ENCODE measurements at regions of chr3 and their contacts with region 1.

Region 1: DNA sequence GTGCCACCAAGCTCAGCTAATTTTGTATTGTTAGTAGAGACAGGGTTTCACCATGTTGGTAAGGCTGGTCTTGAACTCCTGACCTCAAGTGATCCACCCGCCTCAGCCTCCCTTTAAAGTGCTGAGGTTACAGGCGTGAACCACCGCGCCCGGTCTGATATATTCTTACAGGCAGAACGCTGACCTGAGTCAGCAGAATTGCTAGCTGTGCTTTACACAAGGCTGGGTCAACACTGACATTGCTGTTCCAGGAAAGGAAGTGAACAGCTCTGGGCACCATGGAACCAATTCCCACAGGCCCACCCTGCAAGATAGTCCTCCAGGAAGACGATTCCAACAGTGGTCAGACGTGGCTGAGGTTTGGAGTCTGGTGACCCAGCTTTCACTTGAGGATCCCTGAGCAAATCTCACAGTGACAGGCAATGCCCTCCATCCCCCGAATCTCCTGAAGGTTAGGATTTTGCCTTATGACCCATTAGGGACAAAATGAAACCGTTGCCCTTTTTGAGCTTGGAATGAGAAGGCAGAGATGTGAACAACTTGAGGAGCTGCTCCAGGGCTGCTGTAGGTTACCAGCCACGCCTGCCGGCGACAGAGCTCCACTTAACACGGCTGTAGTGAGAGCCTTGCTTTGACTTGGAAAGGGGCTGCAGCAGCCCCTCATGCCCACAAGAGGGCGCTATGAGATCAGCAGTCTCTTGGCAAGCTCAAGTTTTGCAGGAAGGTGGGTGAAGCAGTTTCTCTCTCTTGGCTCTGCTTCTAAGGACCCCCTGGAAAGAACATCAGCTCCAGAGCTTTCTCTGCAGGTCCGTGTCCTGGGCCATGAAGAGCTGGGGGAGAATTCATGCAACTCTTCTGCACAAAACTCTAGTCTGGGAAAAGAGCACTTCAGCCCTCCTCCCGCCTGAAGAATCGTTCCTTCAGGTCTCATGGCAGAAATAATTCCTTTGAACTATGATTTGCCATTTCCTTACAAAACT is 74.1 kb downstream of the SENP2 start:
- DNase-seq: peak; percentile 77
- ATAC-seq: peak; percentile 86
- H3K4me3 Mint-ChIP-seq: no peak overlapping the region
- H3K27ac Mint-ChIP-seq: no peak overlapping the region
- H3K4me1 Mint-ChIP-seq: peaks cover 7% of the 10 kb centered on the region
- H3K27me3 Mint-ChIP-seq: peaks cover 31% of the 10 kb centered on the region

Region 2: GRCh38 chr3:185645596-185646381 is 14.4 kb before region 1 on chr3:
- CTCF ChIA-PET with region 1: interaction called, 16 read pairs
- DNase-seq: no peak
- ATAC-seq: no peak
- H3K4me3 Mint-ChIP-seq: no peak overlapping the region
- H3K27ac Mint-ChIP-seq: no peak overlapping the region
- H3K4me1 Mint-ChIP-seq: no peaks in the 10 kb centered on the region
- H3K27me3 Mint-ChIP-seq: peaks cover 14% of the 10 kb centered on the region

Region 3: DNA sequence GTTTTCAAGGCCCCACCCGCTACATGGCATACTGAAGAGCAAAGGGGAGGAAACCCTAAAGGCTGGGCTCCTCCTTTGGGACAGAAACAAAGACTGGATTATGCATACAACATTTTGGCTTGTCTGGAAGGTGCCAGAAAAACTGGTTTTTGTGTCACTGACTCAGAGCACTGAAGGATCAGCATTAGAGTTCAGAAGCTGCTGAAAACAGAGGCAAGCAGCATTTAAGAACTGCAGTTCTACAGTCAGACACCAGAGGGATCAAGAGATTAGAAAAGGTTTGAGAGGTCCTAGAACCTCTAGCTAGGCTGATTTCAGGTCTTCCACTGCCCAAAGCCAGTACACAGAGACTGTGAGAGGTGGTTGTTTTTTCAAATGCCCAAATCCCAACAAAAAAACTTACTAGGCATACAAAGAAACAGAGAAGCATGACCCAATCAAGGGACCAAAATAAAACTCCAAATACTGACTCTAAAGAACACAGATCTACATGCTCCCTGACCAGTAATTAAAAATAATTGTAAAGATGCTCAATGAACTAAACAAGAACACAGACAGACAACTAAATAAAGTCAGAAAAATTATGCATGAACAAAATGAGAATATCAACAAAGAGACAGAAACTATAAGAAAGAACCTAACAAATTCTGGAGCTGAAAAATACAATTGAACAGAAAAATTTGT is 17.1 kb after region 1 on chr3:
- CTCF ChIA-PET with region 1: interaction called, 14 read pairs
- DNase-seq: no peak
- ATAC-seq: peak; percentile 61
- H3K4me3 Mint-ChIP-seq: no peak overlapping the region
- H3K27ac Mint-ChIP-seq: no peak overlapping the region
- H3K4me1 Mint-ChIP-seq: no peaks in the 10 kb centered on the region
- H3K27me3 Mint-ChIP-seq: peaks cover 50% of the 10 kb centered on the region

Region 4: GRCh38 chr3:185764163-185764979 is 104.1 kb after region 1 on chr3:
- CTCF ChIA-PET with region 1: interaction called, 36 read pairs
- DNase-seq: no peak
- ATAC-seq: no peak
- H3K4me3 Mint-ChIP-seq: no peak overlapping the region
- H3K27ac Mint-ChIP-seq: no peak overlapping the region
- H3K4me1 Mint-ChIP-seq: no peaks in the 10 kb centered on the region
- H3K27me3 Mint-ChIP-seq: peaks cover 69% of the 10 kb centered on the region

Region 5: DNA sequence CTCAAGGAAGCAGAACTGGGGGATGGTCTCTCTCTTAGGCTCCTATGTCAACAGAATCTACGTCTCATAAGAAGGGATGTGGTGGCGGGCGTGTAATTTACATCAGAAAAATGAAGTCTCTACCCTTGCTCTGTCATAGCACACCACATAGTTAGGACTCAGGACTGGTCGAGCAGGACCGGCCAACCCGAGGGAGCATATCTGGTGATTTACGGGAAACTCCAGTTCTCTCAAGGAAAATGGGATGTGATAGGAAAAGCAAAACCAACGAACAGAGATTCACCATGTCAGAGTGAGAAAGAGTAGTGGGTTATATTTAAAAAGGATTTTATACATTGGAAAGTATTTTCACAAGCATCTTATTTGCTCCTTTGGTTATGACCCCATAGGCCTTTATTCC is 109.9 kb after region 1 on chr3:
- CTCF ChIA-PET with region 1: interaction called, 36 read pairs
- DNase-seq: no peak
- ATAC-seq: no peak
- H3K4me3 Mint-ChIP-seq: no peak overlapping the region
- H3K27ac Mint-ChIP-seq: no peak overlapping the region
- H3K4me1 Mint-ChIP-seq: no peaks in the 10 kb centered on the region
- H3K27me3 Mint-ChIP-seq: peaks cover 30% of the 10 kb centered on the region

Region 6: GRCh38 chr3:185781759-185782158 is 121.5 kb after region 1 on chr3:
- CTCF ChIA-PET with region 1: interaction called, 10 read pairs
- DNase-seq: no peak
- ATAC-seq: no peak
- H3K4me3 Mint-ChIP-seq: no peak overlapping the region
- H3K27ac Mint-ChIP-seq: no peak overlapping the region
- H3K4me1 Mint-ChIP-seq: no peaks in the 10 kb centered on the region
- H3K27me3 Mint-ChIP-seq: peaks cover 28% of the 10 kb centered on the region